ENCODE measurements at regions of chr4 and their contacts with region 1.

Region 1: GRCh38 chr4:128287871-128288688 is 467 bp upstream of the PGRMC2 start:
- DNase-seq: peak; percentile 99 to 100
- H3K4me3 ChIP-seq: peak overlapping the region; percentile 91 to 93
- H3K27ac ChIP-seq: peak overlapping the region; percentile 92 to 93
- H3K4me1 ChIP-seq: peaks cover 0 to 11% of the 10 kb centered on the region in 2 donors
- H3K27me3 ChIP-seq: no peaks in the 10 kb centered on the region
- CTCF ChIP-seq: peak in 2 of 3 experiments; percentile 34 to 48

Region 2: DNA sequence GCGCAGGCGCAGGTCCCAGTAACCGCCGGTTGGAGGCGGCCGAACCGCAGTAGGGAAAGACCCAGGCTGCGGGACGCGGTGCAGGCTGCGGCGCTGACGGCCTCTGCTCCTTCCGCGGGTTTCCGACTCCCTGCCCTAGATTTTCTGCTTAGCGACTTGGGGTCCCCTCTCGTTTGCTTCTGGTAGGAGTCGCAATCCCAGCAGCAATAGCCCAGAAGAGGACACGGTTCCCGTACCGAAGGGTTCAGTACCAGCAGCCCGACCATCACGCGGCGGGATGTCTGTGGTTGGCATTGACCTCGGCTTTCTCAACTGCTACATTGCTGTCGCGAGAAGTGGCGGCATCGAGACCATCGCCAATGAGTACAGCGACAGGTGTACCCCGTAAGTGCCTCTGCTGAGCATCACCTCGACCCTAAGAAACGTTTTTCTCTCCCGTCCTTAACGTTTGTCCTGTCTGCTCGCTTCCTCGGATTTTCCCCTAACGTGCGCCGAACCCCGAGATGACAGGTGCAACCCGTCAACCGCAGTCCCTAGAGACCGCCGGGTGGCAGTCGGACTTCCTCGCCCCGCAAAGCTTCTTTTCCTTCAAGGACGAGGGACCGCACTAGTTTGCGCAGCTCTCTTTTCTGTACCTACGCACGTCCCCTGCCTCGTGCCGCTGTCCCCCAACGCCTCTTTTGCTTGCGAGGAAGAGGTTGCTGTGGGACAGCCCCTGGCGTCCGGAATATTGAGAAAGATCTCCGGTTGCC is 505.6 kb before region 1 on chr4 and contains the start of gene HSPA4L:
- intact Hi-C with region 1: loop called (anchors 10 kb)
- DNase-seq: peak; percentile 23 to 76
- H3K4me3 ChIP-seq: peak within 1 kb of the TSS; percentile 81 to 86
- H3K27ac ChIP-seq: peak within 1 kb of the TSS; percentile 80 to 89
- H3K4me1 ChIP-seq: no peaks in the 10 kb centered on the region
- H3K27me3 ChIP-seq: no peaks in the 10 kb centered on the region
- CTCF ChIP-seq: peak; percentile 33 to 41 (median 33)
- total RNA-seq, gene HSPA4L: 5.5 TPM

Region 3: DNA sequence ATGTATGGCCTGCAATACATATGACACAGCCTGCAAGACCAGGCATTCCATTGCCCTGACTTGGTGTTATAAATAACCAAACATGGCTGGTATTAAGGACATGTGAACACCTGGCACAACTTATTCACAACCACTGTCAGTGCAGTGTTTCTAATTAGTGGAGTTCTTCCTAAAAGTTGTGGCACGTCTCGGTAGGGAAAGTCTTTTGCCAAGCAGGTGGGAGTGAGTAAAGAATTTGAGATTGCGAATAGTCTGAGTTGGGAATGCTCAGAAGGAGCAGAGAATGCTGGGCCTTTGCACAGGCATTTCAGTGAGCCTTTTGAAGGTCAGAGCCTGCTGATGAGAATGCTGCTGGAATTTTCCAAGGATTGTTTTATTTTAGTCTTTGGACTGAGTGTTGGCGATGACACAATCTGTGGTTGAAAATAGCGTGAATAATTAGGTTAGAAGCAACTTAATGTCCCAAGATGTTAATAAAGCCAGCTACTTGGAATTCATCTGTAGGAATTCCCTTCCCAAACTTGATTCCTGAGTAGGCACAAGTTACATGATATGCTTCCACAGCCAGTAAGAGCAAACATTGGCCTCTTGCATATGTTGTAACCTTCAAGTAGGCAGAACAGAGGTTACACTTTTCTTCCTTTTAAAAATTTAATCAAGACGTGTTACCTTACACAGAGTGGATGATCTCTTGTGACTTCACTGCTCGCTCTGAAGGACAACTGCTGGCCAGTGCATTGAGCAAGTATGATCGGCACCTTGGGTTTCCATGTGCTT is 83.1 kb after region 1 on chr4:
- intact Hi-C with region 1: loop called (anchors 2 kb)
- DNase-seq: no peak
- H3K4me3 ChIP-seq: no peak overlapping the region
- H3K27ac ChIP-seq: peak overlapping the region; percentile 63 to 64
- H3K4me1 ChIP-seq: peaks cover 12 to 20% of the 10 kb centered on the region in 2 donors
- H3K27me3 ChIP-seq: no peaks in the 10 kb centered on the region
- CTCF ChIP-seq: no peak

Region 4: GRCh38 chr4:128454281-128455075 is 166.4 kb after region 1 on chr4:
- intact Hi-C with region 1: loop called (anchors 5 kb)
- DNase-seq: peak; percentile 59 to 89
- H3K4me3 ChIP-seq: no peak overlapping the region
- H3K27ac ChIP-seq: no peak overlapping the region
- H3K4me1 ChIP-seq: peaks cover 0 to 10% of the 10 kb centered on the region in 2 donors
- H3K27me3 ChIP-seq: no peaks in the 10 kb centered on the region
- CTCF ChIP-seq: peak; percentile 68 to 85 (median 80)

Region 5: GRCh38 chr4:128517739-128518510 is 229.8 kb after region 1 on chr4:
- intact Hi-C with region 1: loop called (anchors 2 kb)
- DNase-seq: peak in 1 of 2 donors; percentile 87
- H3K4me3 ChIP-seq: no peak overlapping the region
- H3K27ac ChIP-seq: peak overlapping the region; percentile 84 to 88
- H3K4me1 ChIP-seq: peaks cover 6 to 49% of the 10 kb centered on the region in 2 donors
- H3K27me3 ChIP-seq: no peaks in the 10 kb centered on the region
- CTCF ChIP-seq: no peak

Region 6: DNA sequence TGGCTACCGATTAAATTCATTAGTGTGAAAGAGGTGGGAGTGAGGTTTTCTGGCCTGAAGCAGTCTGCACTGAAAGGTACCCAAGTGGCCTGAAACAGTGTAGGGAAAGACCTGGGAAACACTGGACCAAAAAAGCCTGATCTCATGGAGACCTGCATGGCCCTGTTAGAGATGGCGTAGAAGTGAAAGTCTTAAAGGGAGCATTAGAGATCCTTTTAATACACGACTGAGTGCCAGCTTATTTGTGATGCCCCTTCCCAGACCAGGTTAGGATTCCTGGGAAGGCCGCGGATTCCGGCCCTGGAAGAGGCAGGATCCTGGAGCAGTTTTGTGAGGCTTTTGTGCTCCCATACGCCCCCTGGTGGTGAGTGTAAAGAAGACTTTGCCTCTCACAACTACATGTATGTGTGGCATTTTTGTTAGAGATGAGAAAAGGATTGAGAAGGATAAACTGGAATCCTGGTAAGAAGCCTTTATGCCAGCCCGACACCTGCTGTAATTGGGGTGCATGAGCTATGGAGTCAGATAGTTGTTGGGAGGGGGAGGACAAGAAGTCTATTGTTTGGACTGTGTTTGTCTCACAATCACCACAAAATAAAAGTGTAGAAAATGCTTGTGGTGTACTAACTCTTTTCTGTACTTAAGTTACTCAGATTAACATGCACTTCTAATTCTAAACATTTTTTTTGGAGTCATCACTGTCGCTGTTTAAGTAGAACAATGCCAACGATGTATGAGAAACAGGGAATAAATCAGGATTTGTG is 575.4 kb after region 1 on chr4:
- intact Hi-C with region 1: loop called (anchors 5 kb)
- DNase-seq: peak in 1 of 2 donors; percentile 82
- H3K4me3 ChIP-seq: no peak overlapping the region
- H3K27ac ChIP-seq: peak overlapping the region; percentile 29 to 30
- H3K4me1 ChIP-seq: peaks cover 0 to 18% of the 10 kb centered on the region in 2 donors
- H3K27me3 ChIP-seq: no peaks in the 10 kb centered on the region
- CTCF ChIP-seq: peak; percentile 62 to 89 (median 75)